ENCODE measurements at regions of chr12 and their contacts with region 1.

Region 1: DNA sequence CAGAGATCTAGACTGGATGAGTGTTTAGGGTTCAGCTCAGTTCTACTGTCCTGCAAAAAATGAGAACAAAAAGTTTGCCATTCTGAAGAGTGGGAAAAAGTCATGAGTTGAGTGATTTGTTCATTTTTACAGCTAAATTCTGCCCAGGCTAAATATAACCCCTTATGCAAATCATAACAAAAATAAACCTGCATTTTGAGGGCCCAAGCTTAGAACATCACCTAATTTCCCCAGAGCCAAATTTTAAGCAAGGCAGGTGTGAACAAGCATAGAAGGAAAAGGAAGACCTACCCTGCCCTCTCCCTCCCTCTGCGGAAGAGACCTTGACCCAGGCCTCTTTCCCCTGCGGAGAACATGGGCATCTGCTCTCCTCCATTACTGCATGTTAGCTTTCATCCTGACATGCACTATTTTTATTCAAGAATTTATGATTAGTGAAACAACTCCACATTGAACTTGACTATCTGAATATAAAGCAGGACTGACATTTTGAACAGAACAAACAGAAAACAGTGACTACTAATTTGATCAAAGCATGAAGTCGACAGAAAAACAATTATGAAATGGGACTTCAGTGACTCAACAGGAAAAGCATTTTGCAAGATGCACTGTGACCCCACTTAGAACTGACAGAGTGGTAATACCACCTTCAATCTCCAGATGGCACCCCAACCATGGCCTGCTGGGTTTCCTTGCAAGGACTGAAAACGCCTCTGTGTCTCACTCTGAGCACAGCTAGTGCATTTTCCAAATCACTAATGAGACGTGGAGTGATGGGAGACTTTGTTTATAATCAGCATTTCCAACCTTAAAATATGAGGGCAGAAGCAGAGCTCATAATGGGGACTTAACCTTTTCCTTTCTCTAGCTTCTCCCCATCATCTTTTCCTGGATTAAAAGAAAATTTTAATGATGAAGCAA is 30.9 kb upstream of the SELPLG start:
- DNase-seq: peak; percentile 65 to 90
- ATAC-seq: peak; percentile 99 to 100 (median 100)
- H3K4me3 ChIP-seq: no peak overlapping the region
- H3K4me3 Mint-ChIP-seq: no peak overlapping the region
- H3K27ac ChIP-seq: peak overlapping the region; percentile 14
- H3K27ac Mint-ChIP-seq: peak overlapping the region; percentile 63 to 88
- H3K4me1 ChIP-seq: peaks cover 6% of the 10 kb centered on the region
- H3K4me1 Mint-ChIP-seq: peaks cover 5 to 12% of the 10 kb centered on the region in 2 donors
- H3K27me3 ChIP-seq: no peaks in the 10 kb centered on the region
- H3K27me3 Mint-ChIP-seq: no peaks in the 10 kb centered on the region
- CTCF ChIP-seq: peak; percentile 84

Region 2: DNA sequence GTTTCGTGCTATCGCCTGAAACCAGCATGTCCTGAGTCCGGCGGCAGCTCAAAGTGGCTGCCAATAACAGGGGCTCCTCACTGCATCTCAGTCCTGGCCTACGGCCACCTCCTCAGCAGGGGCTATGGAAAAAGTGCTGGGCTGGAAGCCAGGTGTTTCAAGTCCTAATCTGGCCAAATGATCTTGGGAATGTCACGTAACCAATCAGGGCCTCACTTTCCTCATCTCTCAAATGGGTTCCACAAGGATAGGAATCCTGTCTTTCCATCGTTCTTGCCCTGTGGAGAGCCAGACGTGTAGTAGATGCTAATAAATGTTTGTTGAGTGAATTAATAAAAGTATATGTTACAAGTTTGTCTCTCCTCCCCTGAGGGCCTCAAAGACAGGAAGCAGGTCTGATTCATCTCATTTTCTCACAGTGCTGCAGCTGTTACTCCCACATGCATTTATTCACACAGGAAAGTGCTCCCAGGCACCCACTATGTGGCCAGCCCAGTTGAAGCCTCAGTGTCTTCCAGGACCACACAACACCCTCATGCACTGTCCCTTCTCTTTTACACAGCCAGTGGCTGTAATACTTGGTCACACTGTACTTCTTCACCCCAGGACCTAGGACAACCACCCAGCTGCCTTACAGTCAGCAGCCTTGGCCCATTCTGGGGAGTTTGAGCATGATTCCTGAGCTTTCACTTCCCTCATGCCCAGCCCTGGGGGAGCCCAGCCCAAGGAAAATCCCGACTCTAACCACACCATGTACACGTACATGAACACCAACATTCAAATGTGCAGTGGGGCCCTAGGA is 330.5 kb before region 1 on chr12:
- intact Hi-C with region 1: no loop called
- DNase-seq: peak; percentile 34 to 60
- ATAC-seq: peak; percentile 47 to 61 (median 57)
- H3K4me3 ChIP-seq: no peak overlapping the region
- H3K4me3 Mint-ChIP-seq: peak overlapping the region; percentile 80
- H3K27ac ChIP-seq: peak overlapping the region; percentile 87
- H3K27ac Mint-ChIP-seq: peak overlapping the region; percentile 94 to 96
- H3K4me1 ChIP-seq: peaks cover 87% of the 10 kb centered on the region
- H3K4me1 Mint-ChIP-seq: peaks cover 91 to 92% of the 10 kb centered on the region in 2 donors
- H3K27me3 ChIP-seq: no peaks in the 10 kb centered on the region
- H3K27me3 Mint-ChIP-seq: no peaks in the 10 kb centered on the region
- CTCF ChIP-seq: no peak

Region 3: GRCh38 chr12:108950991-108951739 is 286.6 kb after region 1 on chr12:
- intact Hi-C with region 1: loop called (anchors 1 kb)
- DNase-seq: peak; percentile 61 to 86
- ATAC-seq: peak; percentile 75 to 89 (median 84)
- H3K4me3 ChIP-seq: no peak overlapping the region
- H3K4me3 Mint-ChIP-seq: no peak overlapping the region
- H3K27ac ChIP-seq: no peak overlapping the region
- H3K27ac Mint-ChIP-seq: no peak overlapping the region
- H3K4me1 ChIP-seq: peaks cover 5% of the 10 kb centered on the region
- H3K4me1 Mint-ChIP-seq: peaks cover 0 to 5% of the 10 kb centered on the region in 2 donors
- H3K27me3 ChIP-seq: no peaks in the 10 kb centered on the region
- H3K27me3 Mint-ChIP-seq: peaks cover 7 to 11% of the 10 kb centered on the region in 2 donors
- CTCF ChIP-seq: peak; percentile 92

Region 4: DNA sequence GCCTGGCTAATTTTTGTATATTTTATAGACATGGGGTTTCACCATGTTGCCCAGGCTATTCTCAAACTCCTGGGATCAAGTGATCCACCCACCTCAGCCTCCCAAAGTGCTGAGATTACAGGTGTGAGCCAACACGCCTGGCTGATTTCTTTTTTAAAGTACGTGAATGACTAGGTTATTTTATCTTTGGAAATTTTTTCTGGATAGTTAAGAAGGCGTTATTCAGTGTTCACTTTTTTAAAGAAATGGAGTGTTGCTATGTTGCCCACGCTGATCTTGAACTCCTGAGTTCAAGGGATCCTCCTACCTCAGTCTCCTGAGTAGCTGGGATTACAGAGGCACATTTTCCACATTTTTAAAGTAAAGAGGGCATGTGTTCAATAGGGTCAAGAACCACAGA is 297.7 kb after region 1 on chr12:
- intact Hi-C with region 1: no loop called
- DNase-seq: no peak
- ATAC-seq: no peak
- H3K4me3 ChIP-seq: no peak overlapping the region
- H3K4me3 Mint-ChIP-seq: no peak overlapping the region
- H3K27ac ChIP-seq: no peak overlapping the region
- H3K27ac Mint-ChIP-seq: no peak overlapping the region
- H3K4me1 ChIP-seq: no peaks in the 10 kb centered on the region
- H3K4me1 Mint-ChIP-seq: no peaks in the 10 kb centered on the region
- H3K27me3 ChIP-seq: no peaks in the 10 kb centered on the region
- H3K27me3 Mint-ChIP-seq: peaks cover 0 to 7% of the 10 kb centered on the region in 2 donors
- CTCF ChIP-seq: no peak